Natural killer cell (primary cell): ENCODE measurements at regions of chr12 and their contacts with region 1.

Region 1: DNA sequence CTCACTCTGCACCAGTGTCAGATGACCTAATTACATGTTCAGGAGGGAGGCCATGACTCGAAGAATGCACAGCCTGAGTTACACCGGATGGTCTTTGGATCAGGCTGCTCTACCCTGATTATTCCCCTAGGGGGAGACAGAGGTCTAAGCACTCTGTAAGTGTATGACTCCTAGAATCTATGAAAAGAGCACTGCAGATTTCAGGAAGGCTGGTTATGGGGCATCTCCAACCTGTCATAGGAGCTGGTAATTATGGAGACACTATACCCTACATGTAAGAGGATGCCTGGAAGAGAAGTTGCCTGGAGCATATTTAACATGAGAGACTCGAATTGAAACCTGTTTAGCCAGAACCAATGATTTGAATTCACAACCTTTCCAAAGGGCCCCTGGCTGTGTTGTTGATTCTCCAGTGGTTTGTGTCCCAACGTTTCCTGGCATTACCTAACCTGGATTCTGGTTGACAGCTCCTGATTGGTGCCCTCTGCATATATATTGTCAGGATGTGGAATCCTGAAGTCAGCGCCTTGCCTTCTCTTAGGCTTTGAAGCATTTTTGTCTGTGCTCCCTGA is at the start of gene MUCL1:
- DNase-seq: peak; percentile 39 to 85
- ATAC-seq: peak; percentile 98 to 100 (median 100)
- H3K4me3 ChIP-seq: no peak within 1 kb of the TSS
- H3K4me3 Mint-ChIP-seq: no peak within 1 kb of the TSS
- H3K27ac ChIP-seq: no peak within 1 kb of the TSS
- H3K27ac Mint-ChIP-seq: peak within 1 kb of the TSS in 1 of 2 donors; percentile 21
- H3K4me1 ChIP-seq: no peaks in the 10 kb centered on the region
- H3K4me1 Mint-ChIP-seq: peaks cover 6 to 8% of the 10 kb centered on the region in 2 donors
- H3K27me3 ChIP-seq: no peaks in the 10 kb centered on the region
- H3K27me3 Mint-ChIP-seq: no peaks in the 10 kb centered on the region
- CTCF ChIP-seq: peak; percentile 96
- total RNA-seq, gene MUCL1: not detected

Region 2: GRCh38 chr12:54749191-54749818 is 104.8 kb before region 1 on chr12:
- intact Hi-C with region 1: loop called (anchors 1 kb)
- DNase-seq: peak in 1 of 2 donors; percentile 86
- ATAC-seq: peak; percentile 82 to 87 (median 85)
- H3K4me3 ChIP-seq: no peak overlapping the region
- H3K4me3 Mint-ChIP-seq: peak overlapping the region; percentile 59
- H3K27ac ChIP-seq: no peak overlapping the region
- H3K27ac Mint-ChIP-seq: no peak overlapping the region
- H3K4me1 ChIP-seq: peaks cover 3% of the 10 kb centered on the region
- H3K4me1 Mint-ChIP-seq: peaks cover 11 to 20% of the 10 kb centered on the region in 2 donors
- H3K27me3 ChIP-seq: no peaks in the 10 kb centered on the region
- H3K27me3 Mint-ChIP-seq: no peaks in the 10 kb centered on the region
- CTCF ChIP-seq: peak; percentile 84

Region 3: DNA sequence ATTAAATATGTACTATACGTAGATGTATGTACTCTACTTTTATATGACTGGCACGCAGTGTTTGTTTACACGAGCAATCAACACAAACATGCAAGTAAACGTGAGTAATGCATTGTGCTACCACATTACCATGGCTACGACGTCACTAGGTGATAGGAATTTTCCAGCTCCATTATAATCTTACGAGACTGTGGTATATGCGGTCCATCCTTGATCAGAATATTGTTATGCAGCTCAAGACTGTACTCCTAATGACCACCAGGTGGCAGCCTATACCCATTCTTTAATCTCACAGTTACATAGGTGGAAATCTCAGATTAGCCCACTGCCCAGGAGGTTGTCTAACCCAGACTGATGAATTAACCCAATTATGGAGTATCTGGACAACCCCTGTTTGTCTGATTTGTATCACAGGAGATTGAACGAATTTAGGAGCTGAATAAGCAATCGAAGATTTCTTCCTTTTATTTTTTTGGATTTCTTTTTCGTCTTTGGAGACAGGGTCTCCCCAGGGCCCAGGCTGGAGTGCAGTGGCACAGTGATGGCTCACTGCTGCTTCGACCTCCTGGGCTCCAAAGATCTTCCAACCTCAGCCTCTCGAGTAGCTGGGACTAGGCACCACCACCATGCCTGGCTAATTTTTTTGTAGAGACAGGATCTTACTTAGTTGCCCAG is 139.2 kb after region 1 on chr12:
- intact Hi-C with region 1: loop called (anchors 1 kb)
- DNase-seq: peak; percentile 37 to 91
- ATAC-seq: peak; percentile 88 to 94 (median 90)
- H3K4me3 ChIP-seq: no peak overlapping the region
- H3K4me3 Mint-ChIP-seq: no peak overlapping the region
- H3K27ac ChIP-seq: no peak overlapping the region
- H3K27ac Mint-ChIP-seq: no peak overlapping the region
- H3K4me1 ChIP-seq: peaks cover 8% of the 10 kb centered on the region
- H3K4me1 Mint-ChIP-seq: peaks cover 23 to 29% of the 10 kb centered on the region in 2 donors
- H3K27me3 ChIP-seq: no peaks in the 10 kb centered on the region
- H3K27me3 Mint-ChIP-seq: peaks cover 6 to 7% of the 10 kb centered on the region in 2 donors
- CTCF ChIP-seq: peak; percentile 97